Right lobe of liver (tissue), 6 donors: ENCODE measurements at regions of chr16 and their contacts with region 1.

Region 1: GRCh38 chr16:30758988-30759521 is 2.8 kb downstream of the CFAP119 start:
- DNase-seq: no peak
- ATAC-seq: peak in 1 of 4 donors; percentile 2
- H3K4me3 ChIP-seq: no peak overlapping the region
- H3K27ac ChIP-seq: peak overlapping the region in 1 of 3 donors; percentile 18
- H3K4me1 ChIP-seq: peaks cover 0 to 35% (median 9%) of the 10 kb centered on the region in 4 donors
- H3K27me3 ChIP-seq: no peaks in the 10 kb centered on the region
- CTCF ChIP-seq: no peak
- POLR2A ChIP-seq: no peak

Region 2: DNA sequence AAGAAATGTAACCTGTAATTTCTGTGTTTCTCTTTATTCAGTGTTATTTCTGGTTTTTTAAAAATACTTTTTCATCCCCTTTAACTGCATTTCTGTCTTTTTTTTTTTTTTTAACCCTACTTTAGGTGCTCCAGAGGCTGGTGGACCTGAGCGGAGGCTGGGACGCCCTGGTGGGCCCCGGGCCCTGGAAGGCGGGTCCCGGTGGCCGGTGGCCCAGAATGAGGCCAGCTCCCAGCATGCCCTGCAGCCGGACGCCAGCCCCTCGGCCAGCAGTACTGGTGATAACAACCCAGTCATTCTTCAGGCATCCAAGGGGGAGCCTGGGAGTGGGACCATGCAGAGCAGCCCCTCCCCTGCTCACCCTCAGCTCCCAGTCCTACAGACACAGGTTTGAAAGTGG is 58.6 kb before region 1 on chr16:
- intact Hi-C with region 1: loop called in 1 of 2 experiments (anchors 10 kb)
- DNase-seq: no peak
- ATAC-seq: no peak
- H3K4me3 ChIP-seq: no peak overlapping the region
- H3K27ac ChIP-seq: no peak overlapping the region
- H3K4me1 ChIP-seq: peaks cover 0 to 21% (median 10%) of the 10 kb centered on the region in 4 donors
- H3K27me3 ChIP-seq: no peaks in the 10 kb centered on the region
- CTCF ChIP-seq: no peak
- POLR2A ChIP-seq: no peak